ENCODE measurements at regions of chr1 and their contacts with region 1.

Region 1: GRCh38 chr1:155562581-155563376 is at the start of gene ASH1L:
- DNase-seq: peak; percentile 97
- H3K4me3 Mint-ChIP-seq: peak within 1 kb of the TSS; percentile 95
- H3K27ac Mint-ChIP-seq: peak within 1 kb of the TSS; percentile 97
- H3K4me1 Mint-ChIP-seq: peaks cover 19% of the 10 kb centered on the region
- H3K27me3 Mint-ChIP-seq: no peaks in the 10 kb centered on the region
- CTCF ChIP-seq: no peak
- total RNA-seq, gene ASH1L: 59.1 and 66.8 TPM in 2 replicates

Region 2: GRCh38 chr1:155574077-155574476 is 11.3 kb after region 1 on chr1:
- CTCF ChIA-PET with region 1: no interaction called
- POLR2A ChIA-PET with region 1: interaction called, 16 read pairs
- intact Hi-C with region 1: no loop called
- DNase-seq: no peak
- H3K4me3 Mint-ChIP-seq: no peak overlapping the region
- H3K27ac Mint-ChIP-seq: no peak overlapping the region
- H3K4me1 Mint-ChIP-seq: peaks cover 11% of the 10 kb centered on the region
- H3K27me3 Mint-ChIP-seq: no peaks in the 10 kb centered on the region
- CTCF ChIP-seq: no peak

Region 3: DNA sequence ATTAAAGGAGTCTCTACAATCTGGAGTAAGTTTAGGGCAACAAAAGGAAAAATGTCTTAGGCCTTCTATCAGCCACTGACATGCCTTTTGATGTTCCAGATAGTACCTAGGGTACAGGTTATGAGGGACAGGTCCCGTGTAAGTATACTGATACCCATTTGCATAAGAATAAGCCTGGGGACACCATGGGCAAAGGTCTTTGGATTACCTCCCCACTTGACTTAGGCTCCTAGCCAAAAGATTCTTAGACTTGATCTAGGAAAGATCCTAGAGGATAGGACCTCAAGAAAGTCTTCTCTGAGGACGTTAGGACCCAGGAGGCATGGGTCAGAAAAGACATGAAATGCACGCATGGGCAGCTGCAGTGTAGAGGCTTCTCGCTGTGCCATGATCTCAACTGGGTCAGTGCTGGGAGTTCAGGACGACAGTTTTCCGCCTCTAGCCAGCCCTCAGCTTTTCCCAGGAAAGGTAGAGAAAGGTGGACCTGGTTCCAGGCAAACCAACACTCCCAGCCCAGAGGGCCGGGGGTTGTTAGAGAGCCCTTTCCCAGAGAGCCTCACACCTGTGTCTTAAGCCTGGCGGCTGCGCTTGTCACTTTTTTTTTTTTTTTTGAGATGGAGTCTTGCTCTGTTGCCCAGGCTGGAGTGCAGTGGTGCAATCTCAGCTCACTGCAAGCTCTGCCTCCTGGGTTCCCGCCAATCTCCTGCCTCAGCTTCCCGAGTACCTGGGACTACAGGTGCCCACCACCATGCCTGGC is 73.8 kb after region 1 on chr1:
- CTCF ChIA-PET with region 1: no interaction called
- POLR2A ChIA-PET with region 1: no interaction called
- intact Hi-C with region 1: no loop called
- DNase-seq: no peak
- H3K4me3 Mint-ChIP-seq: no peak overlapping the region
- H3K27ac Mint-ChIP-seq: no peak overlapping the region
- H3K4me1 Mint-ChIP-seq: peaks cover 5% of the 10 kb centered on the region
- H3K27me3 Mint-ChIP-seq: no peaks in the 10 kb centered on the region
- CTCF ChIP-seq: no peak

Region 4: DNA sequence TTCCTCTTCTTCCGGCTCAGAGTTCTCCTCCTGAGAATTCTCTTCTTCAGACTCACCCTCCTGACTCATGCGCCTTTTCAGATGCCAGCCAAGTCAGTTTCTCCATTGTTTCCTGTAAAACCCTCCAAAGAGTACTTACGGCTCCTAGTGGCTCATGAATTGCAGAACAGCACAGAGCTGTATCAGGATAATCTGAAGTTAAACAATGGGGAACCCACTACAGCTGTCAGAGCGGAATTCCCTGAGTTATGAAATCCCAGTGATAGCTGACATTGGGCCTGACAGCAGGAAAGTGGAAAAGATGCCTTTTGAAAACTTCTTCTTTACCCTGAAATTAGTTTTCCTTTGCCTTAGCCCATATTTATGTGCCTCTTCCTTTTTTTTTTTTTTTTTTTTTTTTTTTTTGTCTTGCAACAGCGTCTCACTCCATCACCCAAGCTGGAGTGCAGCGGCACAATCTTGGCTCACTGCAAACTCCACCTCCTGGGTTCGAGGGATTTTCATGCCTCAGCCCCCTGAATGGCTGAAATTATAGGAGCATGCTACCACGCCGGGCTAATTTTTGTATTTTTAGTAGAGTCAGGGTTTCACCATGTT is 85.9 kb after region 1 on chr1:
- CTCF ChIA-PET with region 1: no interaction called
- POLR2A ChIA-PET with region 1: interaction called, 11 read pairs
- intact Hi-C with region 1: no loop called
- DNase-seq: peak; percentile 97
- H3K4me3 Mint-ChIP-seq: peak overlapping the region; percentile 73
- H3K27ac Mint-ChIP-seq: peak overlapping the region; percentile 47
- H3K4me1 Mint-ChIP-seq: peaks cover 53% of the 10 kb centered on the region
- H3K27me3 Mint-ChIP-seq: no peaks in the 10 kb centered on the region
- CTCF ChIP-seq: peak; percentile 61

Measured in MCF 10A (cell line).